ENCODE measurements at regions of chr6 and their contacts with region 1.

Region 1: GRCh38 chr6:42260972-42261371 is 43.3 kb upstream of the MRPS10 start:
- DNase-seq: no peak
- H3K4me3 Mint-ChIP-seq: no peak overlapping the region
- H3K27ac Mint-ChIP-seq: peak overlapping the region; percentile 61
- H3K4me1 Mint-ChIP-seq: peaks cover 14% of the 10 kb centered on the region
- H3K27me3 Mint-ChIP-seq: no peaks in the 10 kb centered on the region

Region 2: GRCh38 chr6:42532038-42532669 is 271.2 kb after region 1 on chr6:
- intact Hi-C with region 1: loop called (anchors 5 kb)
- DNase-seq: no peak
- H3K4me3 Mint-ChIP-seq: no peak overlapping the region
- H3K27ac Mint-ChIP-seq: no peak overlapping the region
- H3K4me1 Mint-ChIP-seq: no peaks in the 10 kb centered on the region
- H3K27me3 Mint-ChIP-seq: peaks cover 8% of the 10 kb centered on the region

Region 3: DNA sequence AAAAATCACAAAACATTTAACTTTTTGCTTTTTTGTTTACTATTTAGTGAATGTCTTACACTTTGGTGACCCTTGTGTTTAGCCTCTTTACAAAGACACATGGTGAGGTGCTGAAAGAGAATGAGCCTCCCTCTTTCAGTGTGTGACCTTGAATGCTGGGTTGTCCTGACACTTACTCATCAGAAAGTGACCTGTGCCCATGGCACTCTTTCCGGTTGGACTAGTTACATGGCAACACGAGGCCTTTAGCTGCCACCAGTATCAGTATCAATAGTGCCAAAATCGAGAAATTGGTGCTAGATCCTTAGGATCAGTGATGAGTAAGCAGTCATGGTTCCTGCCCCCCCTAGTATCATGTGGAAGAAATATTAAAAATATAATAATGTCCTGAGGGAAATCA is 616.7 kb after region 1 on chr6:
- intact Hi-C with region 1: no loop called
- DNase-seq: no peak
- H3K4me3 Mint-ChIP-seq: peak overlapping the region; percentile 51
- H3K27ac Mint-ChIP-seq: no peak overlapping the region
- H3K4me1 Mint-ChIP-seq: peaks cover 14% of the 10 kb centered on the region
- H3K27me3 Mint-ChIP-seq: no peaks in the 10 kb centered on the region